Dendritic cell treated with granulocyte-macrophage colony-stimulating factor and Interleukin-4, amounts not matched to agents 40 ng/mL and 50 ng/mL, for 4 days (primary cell): ENCODE measurements at regions of chr1 and their contacts with region 1.

Region 1: GRCh38 chr1:223133824-223134435 is 9.1 kb downstream of the TLR5 start:
- H3K4me3 Mint-ChIP-seq: peak overlapping the region; percentile 56
- H3K27ac Mint-ChIP-seq: peak overlapping the region; percentile 24
- H3K4me1 Mint-ChIP-seq: peaks cover 51% of the 10 kb centered on the region
- H3K27me3 Mint-ChIP-seq: peaks cover 2% of the 10 kb centered on the region

Region 2: GRCh38 chr1:222792744-222793143 is 341.2 kb before region 1 on chr1:
- intact Hi-C with region 1: loop called (anchors 10 kb)
- H3K4me3 Mint-ChIP-seq: no peak overlapping the region
- H3K27ac Mint-ChIP-seq: no peak overlapping the region
- H3K4me1 Mint-ChIP-seq: peaks cover 5% of the 10 kb centered on the region
- H3K27me3 Mint-ChIP-seq: peaks cover 10% of the 10 kb centered on the region

Region 3: DNA sequence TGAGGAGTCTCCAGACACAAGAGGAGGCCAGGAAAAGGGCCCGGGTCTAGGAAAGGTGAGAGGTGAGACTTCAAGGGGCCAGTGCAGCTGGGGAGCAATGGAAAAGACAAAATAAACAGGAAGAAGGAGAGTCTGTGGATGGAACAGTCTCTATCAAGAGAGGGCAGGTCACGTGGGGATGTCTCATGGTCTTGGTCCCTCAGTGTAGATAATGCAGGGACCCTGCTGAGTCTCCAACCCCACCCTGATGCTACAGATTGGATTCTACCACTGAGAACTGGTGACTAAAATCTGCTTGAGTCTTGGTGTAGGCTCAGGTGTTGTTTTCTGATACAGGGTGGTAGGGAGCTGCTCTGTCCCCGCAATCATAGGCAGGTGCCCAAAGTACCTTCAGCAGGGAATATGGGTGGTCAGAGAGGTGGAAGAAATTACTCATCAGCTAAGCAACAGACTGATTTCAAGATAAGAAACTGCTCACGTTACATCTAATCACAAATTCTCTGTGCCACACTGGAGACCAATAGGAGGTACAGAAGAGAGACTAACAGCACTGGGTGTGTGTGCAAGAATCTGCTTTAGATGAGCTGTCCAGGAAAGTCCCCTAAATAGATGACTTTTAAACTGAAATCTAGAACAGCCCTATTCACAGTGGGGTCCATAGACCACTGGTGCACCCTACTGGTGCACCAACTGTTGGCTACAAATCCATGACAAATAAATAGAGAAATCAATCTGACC is 110.6 kb after region 1 on chr1:
- intact Hi-C with region 1: loop called (anchors 1 kb)
- H3K4me3 Mint-ChIP-seq: no peak overlapping the region
- H3K27ac Mint-ChIP-seq: no peak overlapping the region
- H3K4me1 Mint-ChIP-seq: peaks cover 13% of the 10 kb centered on the region
- H3K27me3 Mint-ChIP-seq: peaks cover 13% of the 10 kb centered on the region